ENCODE measurements at regions of chr3 and their contacts with region 1.

Region 1: GRCh38 chr3:195259475-195260279 is 11.3 kb downstream of the XXYLT1 start:
- DNase-seq: peak; percentile 96
- H3K4me3 ChIP-seq: peak overlapping the region in 1 of 3 experiments; percentile 70
- H3K27ac ChIP-seq: peak overlapping the region; percentile 98
- H3K4me1 ChIP-seq: peaks cover 55% of the 10 kb centered on the region
- H3K27me3 ChIP-seq: no peaks in the 10 kb centered on the region
- CTCF ChIP-seq: peak; percentile 44 to 88
- POLR2A ChIP-seq: peak; percentile 38

Region 2: DNA sequence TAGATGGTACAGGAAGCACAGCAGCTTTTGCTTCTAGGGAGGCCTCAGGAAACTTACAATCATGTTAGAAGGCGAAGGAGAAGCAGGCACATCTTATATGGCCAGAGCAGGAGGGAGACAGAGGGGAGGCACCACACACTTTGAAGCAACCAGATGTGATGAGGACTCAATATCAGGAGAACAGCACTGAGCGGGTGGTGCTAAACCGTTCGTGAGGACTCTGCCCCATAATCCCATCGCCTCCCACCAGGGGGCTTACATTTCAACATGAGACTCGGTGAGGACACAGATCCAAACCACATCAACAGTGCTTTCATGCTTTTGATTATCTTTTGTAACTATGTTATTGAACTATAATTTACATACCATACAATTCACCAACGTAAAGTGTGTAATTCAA is 618.8 kb before region 1 on chr3:
- CTCF ChIA-PET with region 1: interaction called, 3 read pairs
- POLR2A ChIA-PET with region 1: no interaction called
- dilution Hi-C with region 1: no loop called
- intact Hi-C with region 1: loop called (anchors 1 kb)
- DNase-seq: peak; percentile 79
- H3K4me3 ChIP-seq: peak overlapping the region in 1 of 3 experiments; percentile 14
- H3K27ac ChIP-seq: peak overlapping the region; percentile 91
- H3K4me1 ChIP-seq: peaks cover 35% of the 10 kb centered on the region
- H3K27me3 ChIP-seq: no peaks in the 10 kb centered on the region
- CTCF ChIP-seq: peak; percentile 49 to 61
- POLR2A ChIP-seq: no peak

Region 3: GRCh38 chr3:194738254-194739093 is 521.2 kb before region 1 on chr3:
- CTCF ChIA-PET with region 1: no interaction called
- POLR2A ChIA-PET with region 1: no interaction called
- dilution Hi-C with region 1: no loop called
- intact Hi-C with region 1: loop called (anchors 1 kb)
- DNase-seq: peak; percentile 76
- H3K4me3 ChIP-seq: no peak overlapping the region
- H3K27ac ChIP-seq: peak overlapping the region; percentile 76
- H3K4me1 ChIP-seq: peaks cover 44% of the 10 kb centered on the region
- H3K27me3 ChIP-seq: no peaks in the 10 kb centered on the region
- CTCF ChIP-seq: no peak
- POLR2A ChIP-seq: no peak

Region 4: GRCh38 chr3:194930377-194931204 is 329.1 kb before region 1 on chr3:
- CTCF ChIA-PET with region 1: interaction called, 3 read pairs
- POLR2A ChIA-PET with region 1: no interaction called
- dilution Hi-C with region 1: no loop called
- intact Hi-C with region 1: loop called (anchors 1 kb)
- DNase-seq: peak; percentile 99
- H3K4me3 ChIP-seq: no peak overlapping the region
- H3K27ac ChIP-seq: peak overlapping the region; percentile 98
- H3K4me1 ChIP-seq: peaks cover 47% of the 10 kb centered on the region
- H3K27me3 ChIP-seq: no peaks in the 10 kb centered on the region
- CTCF ChIP-seq: no peak
- POLR2A ChIP-seq: peak; percentile 41

Region 5: DNA sequence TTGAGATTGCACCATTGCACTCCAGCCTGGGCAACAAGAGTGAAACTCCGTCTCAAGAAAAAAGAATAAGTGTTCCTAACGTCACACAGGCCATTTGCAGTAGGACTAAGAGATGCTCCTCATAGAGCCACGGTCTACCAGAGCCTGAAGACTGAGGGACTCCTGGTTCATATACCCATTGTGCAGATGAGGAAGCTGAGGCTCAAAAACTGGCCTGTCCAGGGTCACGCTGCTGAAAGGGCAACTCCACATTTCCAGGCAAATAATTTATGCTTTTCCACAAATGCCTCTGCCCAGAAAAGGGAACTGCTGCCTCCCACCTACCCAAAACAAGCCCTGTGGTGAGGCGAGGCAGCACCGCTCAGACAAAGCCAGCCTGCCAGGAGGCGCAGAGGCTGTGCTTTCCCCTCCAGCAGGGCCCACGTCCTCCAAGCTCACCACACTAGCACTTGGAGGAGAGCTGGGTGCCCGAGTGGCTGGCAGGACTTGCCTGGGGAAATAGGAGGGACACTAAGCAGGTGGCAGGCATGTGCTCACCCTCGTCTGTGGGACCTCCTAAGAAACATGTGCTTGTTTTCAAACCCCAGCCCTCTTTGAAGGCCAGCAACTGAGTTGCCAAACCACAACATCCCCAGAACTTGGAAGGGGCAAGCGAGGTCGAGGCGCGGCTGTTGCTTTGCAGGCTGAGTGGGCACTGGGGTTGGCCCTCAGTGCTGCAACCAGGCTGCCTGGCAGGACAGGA is 184.3 kb before region 1 on chr3:
- CTCF ChIA-PET with region 1: no interaction called
- POLR2A ChIA-PET with region 1: no interaction called
- dilution Hi-C with region 1: no loop called
- intact Hi-C with region 1: no loop called
- DNase-seq: no peak
- H3K4me3 ChIP-seq: no peak overlapping the region
- H3K27ac ChIP-seq: no peak overlapping the region
- H3K4me1 ChIP-seq: peaks cover 7% of the 10 kb centered on the region
- H3K27me3 ChIP-seq: no peaks in the 10 kb centered on the region
- CTCF ChIP-seq: no peak
- POLR2A ChIP-seq: no peak

Region 6: DNA sequence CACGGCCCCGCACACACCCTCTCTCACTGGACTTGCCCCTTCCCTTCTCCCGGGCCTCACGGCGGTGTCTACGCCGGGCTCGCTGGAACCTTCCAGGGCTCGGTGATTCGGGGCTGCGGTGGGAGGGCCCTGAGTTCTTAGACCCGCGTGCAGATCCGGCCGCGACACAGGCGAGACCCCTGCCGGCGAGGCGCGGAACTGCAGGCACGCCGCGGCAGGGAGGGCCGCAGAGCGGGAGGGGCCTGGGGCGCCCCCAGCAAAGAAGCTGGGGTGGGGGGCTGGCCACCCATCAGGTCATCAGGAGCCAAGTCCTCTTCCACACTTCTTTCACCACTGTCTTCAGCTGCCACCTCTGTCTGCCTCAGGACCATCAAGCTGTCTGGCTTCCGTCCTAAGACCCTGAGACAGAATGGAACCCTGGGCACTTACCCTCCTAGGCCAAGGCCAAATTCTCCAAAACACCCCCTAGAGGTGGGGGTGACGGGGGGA is 153.2 kb before region 1 on chr3:
- CTCF ChIA-PET with region 1: interaction called, 5 read pairs
- POLR2A ChIA-PET with region 1: no interaction called
- dilution Hi-C with region 1: no loop called
- intact Hi-C with region 1: loop called (anchors 1 kb)
- DNase-seq: peak; percentile 76
- H3K4me3 ChIP-seq: no peak overlapping the region
- H3K27ac ChIP-seq: peak overlapping the region; percentile 96
- H3K4me1 ChIP-seq: peaks cover 44% of the 10 kb centered on the region
- H3K27me3 ChIP-seq: no peaks in the 10 kb centered on the region
- CTCF ChIP-seq: peak; percentile 97 to 98
- POLR2A ChIP-seq: no peak

Region 7: DNA sequence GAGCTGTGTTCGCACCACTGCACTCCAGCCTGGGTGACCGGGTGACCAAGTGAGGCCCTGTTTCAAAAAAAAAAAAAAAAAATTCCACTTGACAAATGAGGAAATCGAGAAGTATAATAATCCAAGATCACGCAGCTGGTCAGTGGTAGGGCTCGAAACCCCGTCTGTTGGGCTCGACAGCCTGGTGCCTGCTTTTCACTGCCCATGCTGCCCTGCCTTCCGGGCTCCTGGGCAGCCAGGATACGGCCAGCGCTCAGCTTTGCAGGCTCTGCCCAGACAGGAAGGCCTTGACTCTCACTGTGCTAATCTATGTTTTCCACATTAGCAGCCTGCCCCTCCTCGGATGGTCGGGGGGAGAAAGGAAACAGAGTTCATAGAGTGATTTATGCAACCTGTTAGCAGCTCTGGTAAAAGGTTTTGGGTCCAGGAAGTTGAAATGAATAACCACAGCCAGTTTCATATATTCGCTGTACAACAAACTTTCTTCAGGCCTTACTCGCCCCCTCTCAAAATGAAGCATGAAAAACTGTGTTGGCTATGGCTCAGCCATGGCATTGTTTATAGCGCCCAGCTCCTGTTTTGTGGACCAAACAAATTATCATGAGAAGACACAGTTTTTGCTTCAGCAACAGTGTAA is 97.5 kb before region 1 on chr3:
- CTCF ChIA-PET with region 1: interaction called, 4 read pairs
- POLR2A ChIA-PET with region 1: interaction called, 3 read pairs
- dilution Hi-C with region 1: no loop called
- intact Hi-C with region 1: loop called (anchors 1 kb)
- DNase-seq: peak; percentile 99
- H3K4me3 ChIP-seq: no peak overlapping the region
- H3K27ac ChIP-seq: peak overlapping the region; percentile 95
- H3K4me1 ChIP-seq: peaks cover 85% of the 10 kb centered on the region
- H3K27me3 ChIP-seq: no peaks in the 10 kb centered on the region
- CTCF ChIP-seq: no peak
- POLR2A ChIP-seq: peak; percentile 89

Region 8: GRCh38 chr3:195271116-195271858 is 11.6 kb after region 1 on chr3 and contains the start of gene XXYLT1:
- CTCF ChIA-PET with region 1: interaction called, 46 read pairs
- POLR2A ChIA-PET with region 1: interaction called, 3 read pairs
- dilution Hi-C with region 1: no loop called
- intact Hi-C with region 1: no loop called
- DNase-seq: peak; percentile 93
- H3K4me3 ChIP-seq: peak within 1 kb of the TSS; percentile 79 to 91 (median 79)
- H3K27ac ChIP-seq: peak within 1 kb of the TSS; percentile 68
- H3K4me1 ChIP-seq: peaks cover 23% of the 10 kb centered on the region
- H3K27me3 ChIP-seq: no peaks in the 10 kb centered on the region
- CTCF ChIP-seq: peak; percentile 94 to 98
- POLR2A ChIP-seq: peak; percentile 84
- total RNA-seq, gene XXYLT1: 58.6 and 78.1 TPM in 2 replicates

Region 9: GRCh38 chr3:195609229-195609628 is 349.6 kb after region 1 on chr3:
- CTCF ChIA-PET with region 1: no interaction called
- POLR2A ChIA-PET with region 1: no interaction called
- dilution Hi-C with region 1: no loop called
- intact Hi-C with region 1: no loop called
- DNase-seq: no peak
- H3K4me3 ChIP-seq: no peak overlapping the region
- H3K27ac ChIP-seq: no peak overlapping the region
- H3K4me1 ChIP-seq: no peaks in the 10 kb centered on the region
- H3K27me3 ChIP-seq: peaks cover 2 to 3% of the 10 kb centered on the region in 2 experiments
- CTCF ChIP-seq: no peak
- POLR2A ChIP-seq: no peak

Measured in endothelial cell of umbilical vein (primary cell).